Spleen (tissue), 13 donors: ENCODE measurements at regions of chr19 and their contacts with region 1.

Region 1: DNA sequence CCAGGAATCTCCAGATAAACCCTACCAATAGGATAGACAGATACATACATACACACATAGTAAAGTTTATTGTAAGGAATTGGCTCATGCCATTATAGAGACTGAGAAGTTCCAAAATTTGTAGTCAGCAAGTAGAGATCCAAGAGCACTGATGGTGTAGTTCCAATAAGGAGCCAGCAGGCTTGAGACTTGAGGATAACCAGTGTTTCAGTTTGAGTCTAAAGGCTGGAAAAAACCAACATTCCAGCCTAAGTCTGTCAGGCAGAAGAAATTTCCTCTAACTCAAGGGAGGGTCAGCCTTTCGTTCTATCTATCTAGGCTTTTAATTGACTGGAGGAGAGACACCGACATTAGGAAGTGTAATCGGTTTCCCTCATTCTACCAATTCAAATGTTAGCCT is 110.2 kb upstream of the TSHZ3 start:
- DNase-seq: no peak
- H3K4me3 ChIP-seq: no peak overlapping the region
- H3K27ac ChIP-seq: no peak overlapping the region
- H3K4me1 ChIP-seq: no peaks in the 10 kb centered on the region
- H3K27me3 ChIP-seq: peaks cover 0 to 5% (median 0%) of the 10 kb centered on the region in 7 donors
- CTCF ChIP-seq: no peak
- POLR2A ChIP-seq: no peak

Region 2: DNA sequence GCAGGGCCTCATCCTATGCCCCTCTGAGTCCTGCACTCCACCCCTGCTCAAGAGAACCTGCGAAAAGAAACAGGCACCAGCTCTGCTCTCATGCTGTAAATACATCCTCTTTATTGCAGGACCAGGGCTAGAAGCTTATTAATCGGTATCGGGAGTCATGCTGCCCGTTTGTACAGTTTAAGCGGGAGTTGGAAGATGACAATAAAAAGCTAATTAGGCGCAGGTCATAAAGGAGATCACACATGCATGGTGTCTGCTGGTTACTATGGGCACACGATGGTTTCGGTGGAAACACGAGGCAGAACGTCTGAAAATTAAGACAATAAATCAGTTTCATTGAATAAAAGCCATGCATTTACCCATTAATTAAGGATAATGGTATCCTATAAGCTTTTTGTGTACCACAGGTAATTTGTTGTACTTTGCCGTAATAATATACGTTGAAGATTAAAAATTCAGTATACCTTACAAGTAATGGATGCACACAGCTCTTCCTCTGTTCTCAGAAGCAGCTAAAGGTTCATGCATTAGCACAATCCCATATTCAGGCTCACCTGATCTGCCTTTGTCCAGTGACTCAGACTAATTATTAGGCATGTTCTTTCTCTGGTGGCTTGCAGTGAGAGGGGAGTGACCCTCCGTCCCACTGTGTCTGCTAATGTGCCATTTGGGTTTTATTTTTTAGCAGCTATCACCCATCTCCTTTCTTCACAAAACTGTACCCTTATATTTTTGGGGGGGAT is 516.2 kb before region 1 on chr19:
- intact Hi-C with region 1: loop called (anchors 5 kb)
- DNase-seq: no peak
- H3K4me3 ChIP-seq: no peak overlapping the region
- H3K27ac ChIP-seq: no peak overlapping the region
- H3K4me1 ChIP-seq: no peaks in the 10 kb centered on the region
- H3K27me3 ChIP-seq: peaks cover 0 to 21% (median 0%) of the 10 kb centered on the region in 7 donors
- CTCF ChIP-seq: no peak
- POLR2A ChIP-seq: no peak

Region 3: GRCh38 chr19:31023038-31023437 is 436.4 kb before region 1 on chr19:
- intact Hi-C with region 1: no loop called
- DNase-seq: no peak
- H3K4me3 ChIP-seq: no peak overlapping the region
- H3K27ac ChIP-seq: peak overlapping the region in 5 of 8 donors; percentile 30 to 61 (median 42)
- H3K4me1 ChIP-seq: peaks cover 0 to 8% (median 0%) of the 10 kb centered on the region in 6 donors
- H3K27me3 ChIP-seq: no peaks in the 10 kb centered on the region
- CTCF ChIP-seq: no peak
- POLR2A ChIP-seq: no peak

Region 4: DNA sequence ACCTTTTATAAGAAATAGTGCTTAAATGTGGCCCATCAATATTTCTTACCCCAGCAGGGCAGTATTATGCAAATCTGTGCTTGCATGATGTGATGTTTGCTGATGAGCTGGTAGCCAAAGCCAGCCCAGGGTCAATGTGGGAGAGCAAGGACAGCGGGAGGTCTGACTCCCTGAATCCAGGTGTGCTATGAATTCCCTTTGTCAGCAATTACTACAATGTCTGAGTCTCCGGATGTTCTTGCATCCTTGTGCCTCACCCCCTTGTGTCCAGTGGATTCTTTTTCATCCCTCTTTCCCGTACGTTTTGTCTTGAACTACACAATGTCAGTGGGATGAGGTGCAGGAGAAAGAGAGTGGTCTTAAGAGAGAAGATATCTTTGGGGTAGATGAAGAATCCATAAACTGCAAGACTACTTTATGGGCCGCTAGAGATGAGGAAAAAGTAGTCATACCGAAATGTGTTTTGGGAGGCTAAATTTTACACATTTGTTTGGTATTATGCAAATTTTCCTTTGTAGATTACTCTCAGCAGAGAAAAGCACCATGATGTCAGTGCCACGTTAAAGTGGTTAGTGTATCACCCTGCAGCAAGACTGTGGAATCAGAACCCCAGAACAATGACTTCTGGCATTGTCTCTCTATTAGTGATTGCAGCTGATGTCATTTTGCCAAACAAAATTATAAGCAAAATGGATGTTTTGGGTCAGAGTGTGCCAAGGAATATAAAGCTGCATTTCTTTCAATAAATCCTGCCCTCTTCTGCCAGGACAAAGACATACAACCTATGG is 56.7 kb before region 1 on chr19:
- intact Hi-C with region 1: no loop called
- DNase-seq: no peak
- H3K4me3 ChIP-seq: no peak overlapping the region
- H3K27ac ChIP-seq: no peak overlapping the region
- H3K4me1 ChIP-seq: no peaks in the 10 kb centered on the region
- H3K27me3 ChIP-seq: no peaks in the 10 kb centered on the region
- CTCF ChIP-seq: no peak
- POLR2A ChIP-seq: no peak

Region 5: GRCh38 chr19:31491242-31491641 is 31.8 kb after region 1 on chr19:
- intact Hi-C with region 1: no loop called
- DNase-seq: no peak
- H3K4me3 ChIP-seq: no peak overlapping the region
- H3K27ac ChIP-seq: no peak overlapping the region
- H3K4me1 ChIP-seq: no peaks in the 10 kb centered on the region
- H3K27me3 ChIP-seq: no peaks in the 10 kb centered on the region
- CTCF ChIP-seq: no peak
- POLR2A ChIP-seq: no peak

Region 6: GRCh38 chr19:31804668-31805067 is 345.2 kb after region 1 on chr19:
- intact Hi-C with region 1: no loop called
- DNase-seq: no peak
- H3K4me3 ChIP-seq: no peak overlapping the region
- H3K27ac ChIP-seq: no peak overlapping the region
- H3K4me1 ChIP-seq: no peaks in the 10 kb centered on the region
- H3K27me3 ChIP-seq: peaks cover 0 to 6% (median 0%) of the 10 kb centered on the region in 7 donors
- CTCF ChIP-seq: no peak
- POLR2A ChIP-seq: no peak